ENCODE measurements at regions of chr3 and their contacts with region 1.

Region 1: DNA sequence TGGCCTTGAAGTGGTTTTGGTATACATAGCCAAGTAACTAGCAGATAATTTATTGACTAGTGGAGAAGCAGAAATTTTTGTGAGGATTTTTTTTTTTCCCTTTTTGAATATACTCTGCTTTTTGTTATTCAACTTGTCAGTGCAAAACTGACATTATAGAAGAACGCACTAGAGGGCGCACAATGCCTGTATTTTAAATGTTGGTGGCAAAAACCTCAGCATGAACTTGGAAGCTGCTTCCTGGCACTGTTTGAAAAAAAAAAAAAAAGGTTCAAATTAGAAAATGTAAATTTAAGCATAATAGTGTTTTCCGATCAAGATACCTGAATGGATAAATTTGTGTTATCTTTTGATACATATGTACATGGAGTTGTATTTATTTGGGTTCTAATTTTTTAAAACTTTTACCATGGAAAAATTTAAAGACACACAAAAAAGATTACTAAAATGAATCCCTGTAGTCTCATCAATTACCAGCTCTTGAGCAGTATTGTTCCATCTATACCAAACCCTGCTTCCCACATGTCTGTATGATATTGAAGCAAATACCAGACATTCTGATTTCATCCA is 56.0 kb downstream of the SLC25A26 start:
- DNase-seq: peak; percentile 37
- H3K4me3 Mint-ChIP-seq: no peak overlapping the region
- H3K27ac Mint-ChIP-seq: no peak overlapping the region
- H3K4me1 Mint-ChIP-seq: peaks cover 12% of the 10 kb centered on the region
- H3K27me3 Mint-ChIP-seq: no peaks in the 10 kb centered on the region

Region 2: DNA sequence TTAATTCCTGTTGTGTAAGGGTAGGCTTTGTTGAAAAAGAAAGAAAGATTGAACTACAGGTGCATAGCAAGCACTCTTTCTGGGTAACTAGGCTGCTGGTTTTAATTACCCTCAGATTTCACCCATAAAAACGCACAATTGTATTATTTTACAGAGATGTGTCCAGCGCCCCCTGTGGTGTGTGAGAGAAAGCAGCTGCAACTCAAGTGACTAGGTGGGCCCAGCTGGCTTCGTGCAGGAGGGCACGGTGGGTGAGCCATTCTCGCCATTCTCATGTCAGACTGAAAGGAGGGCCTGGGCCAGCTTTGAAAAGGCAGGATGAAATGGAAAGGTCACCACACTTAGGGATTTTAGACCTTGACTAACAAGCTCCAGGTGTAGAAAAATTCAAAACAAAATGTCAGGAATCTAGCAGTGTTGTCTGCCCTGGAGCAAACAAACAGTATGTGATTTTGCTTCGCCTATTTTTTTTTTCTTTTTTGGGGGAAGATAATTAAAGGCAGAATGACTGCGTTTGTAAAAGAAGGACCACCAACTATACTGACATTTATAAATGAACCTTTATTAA is 101.5 kb after region 1 on chr3:
- intact Hi-C with region 1: loop called (anchors 5 kb)
- DNase-seq: no peak
- H3K4me3 Mint-ChIP-seq: no peak overlapping the region
- H3K27ac Mint-ChIP-seq: peak overlapping the region; percentile 66
- H3K4me1 Mint-ChIP-seq: peaks cover 18% of the 10 kb centered on the region
- H3K27me3 Mint-ChIP-seq: no peaks in the 10 kb centered on the region

Region 3: GRCh38 chr3:66394019-66394752 is 117.4 kb after region 1 on chr3:
- intact Hi-C with region 1: loop called (anchors 5 kb)
- DNase-seq: peak; percentile 37
- H3K4me3 Mint-ChIP-seq: peak overlapping the region; percentile 10
- H3K27ac Mint-ChIP-seq: peak overlapping the region; percentile 74
- H3K4me1 Mint-ChIP-seq: peaks cover 19% of the 10 kb centered on the region
- H3K27me3 Mint-ChIP-seq: no peaks in the 10 kb centered on the region